Breast epithelium (tissue), 4 donors: ENCODE measurements at regions of chr6 and their contacts with region 1.

Region 1: DNA sequence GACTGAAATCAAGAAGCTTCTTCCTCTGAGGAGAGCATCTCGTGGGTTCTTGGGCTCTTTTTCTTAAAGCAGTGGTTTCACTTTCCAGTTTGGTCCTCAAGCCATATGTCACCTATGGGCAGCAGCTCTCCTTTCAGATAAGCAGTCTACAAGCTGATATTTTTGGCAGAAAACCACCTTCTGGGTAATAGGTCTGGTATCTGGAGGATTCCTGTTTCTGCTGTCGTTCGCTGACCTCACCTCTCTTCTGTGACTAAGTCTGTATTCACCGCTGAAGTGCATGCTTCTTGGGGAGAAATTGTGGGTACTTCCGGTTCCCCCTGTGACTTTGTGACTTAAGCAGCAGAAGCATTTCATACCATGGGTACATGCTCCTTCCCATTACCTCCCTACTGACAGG is 193.6 kb downstream of the EDN1 start:
- DNase-seq: no peak
- H3K4me3 ChIP-seq: no peak overlapping the region
- H3K27ac ChIP-seq: no peak overlapping the region
- H3K4me1 ChIP-seq: no peaks in the 10 kb centered on the region
- H3K27me3 ChIP-seq: no peaks in the 10 kb centered on the region
- CTCF ChIP-seq: no peak
- POLR2A ChIP-seq: no peak

Region 2: GRCh38 chr6:12527339-12527738 is 43.6 kb after region 1 on chr6:
- intact Hi-C with region 1: loop called (anchors 2 kb)
- DNase-seq: no peak
- H3K4me3 ChIP-seq: no peak overlapping the region
- H3K27ac ChIP-seq: no peak overlapping the region
- H3K4me1 ChIP-seq: no peaks in the 10 kb centered on the region
- H3K27me3 ChIP-seq: no peaks in the 10 kb centered on the region
- CTCF ChIP-seq: no peak
- POLR2A ChIP-seq: no peak